CD4-positive, alpha-beta memory T cell (primary cell): ENCODE measurements at regions of chr19 and their contacts with region 1.

Region 1: GRCh38 chr19:58572818-58573657 is at the start of gene MZF1:
- DNase-seq: peak; percentile 99 to 100 (median 100)
- H3K4me3 ChIP-seq: peak within 1 kb of the TSS; percentile 67 to 78
- H3K4me3 Mint-ChIP-seq: peak within 1 kb of the TSS; percentile 89 to 99 (median 96)
- H3K27ac ChIP-seq: peak within 1 kb of the TSS; percentile 99
- H3K27ac Mint-ChIP-seq: peak within 1 kb of the TSS; percentile 96 to 100 (median 100)
- H3K4me1 ChIP-seq: peaks cover 29% of the 10 kb centered on the region
- H3K4me1 Mint-ChIP-seq: peaks cover 16 to 44% (median 32%) of the 10 kb centered on the region in 4 donors
- H3K27me3 ChIP-seq: no peaks in the 10 kb centered on the region
- H3K27me3 Mint-ChIP-seq: no peaks in the 10 kb centered on the region
- total RNA-seq, gene MZF1: 42.7 to 44.4 TPM

Region 2: DNA sequence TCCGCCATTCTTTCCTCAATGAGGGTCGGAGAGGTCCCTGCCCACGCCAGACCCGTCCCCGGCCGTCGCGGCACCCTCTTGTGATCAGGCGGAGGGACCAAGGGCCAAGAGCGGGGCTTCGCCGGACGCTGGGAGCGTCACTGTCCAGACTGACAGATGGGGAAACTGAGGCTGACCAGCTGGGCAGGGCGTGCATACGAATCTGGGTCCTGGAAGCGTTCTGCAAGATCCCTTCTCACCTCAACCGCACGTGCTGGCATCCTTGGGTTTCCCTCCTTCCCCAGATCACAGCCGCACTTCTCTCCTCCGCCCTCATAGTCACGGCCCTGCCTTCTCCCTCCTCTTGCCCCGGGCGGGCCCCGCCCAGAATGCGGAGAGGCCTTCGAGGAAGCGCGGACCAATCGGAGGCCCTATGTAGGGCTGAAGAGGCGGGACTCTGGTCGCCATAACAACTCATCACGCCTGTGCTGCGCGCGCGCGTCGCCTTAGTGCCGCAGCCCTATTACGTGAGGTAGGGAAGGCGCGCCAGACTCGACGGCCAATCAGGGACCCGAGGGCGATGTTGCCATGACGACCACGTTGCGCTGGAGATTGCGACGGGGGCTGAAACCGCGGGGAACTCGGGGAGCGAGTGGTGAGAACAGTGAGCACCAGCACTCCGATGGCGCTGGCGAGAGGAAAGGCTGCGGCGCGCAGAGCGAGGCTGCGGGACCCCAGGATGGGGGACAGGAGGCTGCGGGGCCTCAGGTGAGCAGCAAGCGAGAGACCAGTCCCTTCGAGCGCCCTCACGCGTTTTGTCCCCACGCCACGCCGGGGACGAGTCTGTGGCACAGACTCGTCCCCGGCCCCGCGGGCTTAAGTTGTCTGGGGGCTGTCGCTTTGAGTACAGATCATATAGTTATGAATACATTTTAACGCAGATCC is 171.9 kb before region 1 on chr19:
- CTCF ChIA-PET with region 1: no interaction called
- POLR2A ChIA-PET with region 1: no interaction called
- intact Hi-C with region 1: loop called (anchors 1 kb)
- DNase-seq: peak; percentile 98 to 100 (median 99)
- H3K4me3 ChIP-seq: peak overlapping the region; percentile 57 to 59
- H3K4me3 Mint-ChIP-seq: peak overlapping the region; percentile 87 to 97 (median 91)
- H3K27ac ChIP-seq: peak overlapping the region; percentile 74
- H3K27ac Mint-ChIP-seq: peak overlapping the region; percentile 89 to 99 (median 97)
- H3K4me1 ChIP-seq: peaks cover 20% of the 10 kb centered on the region
- H3K4me1 Mint-ChIP-seq: peaks cover 5 to 20% (median 10%) of the 10 kb centered on the region in 4 donors
- H3K27me3 ChIP-seq: peaks cover 8% of the 10 kb centered on the region
- H3K27me3 Mint-ChIP-seq: peaks cover 6 to 9% of the 10 kb centered on the region in 2 donors

Region 3: GRCh38 chr19:58408152-58409009 is 164.7 kb before region 1 on chr19 and contains the start of gene ZNF584:
- CTCF ChIA-PET with region 1: no interaction called
- POLR2A ChIA-PET with region 1: no interaction called
- intact Hi-C with region 1: loop called (anchors 1 kb)
- DNase-seq: peak; percentile 93 to 94 (median 93)
- H3K4me3 ChIP-seq: peak within 1 kb of the TSS; percentile 71 to 94
- H3K4me3 Mint-ChIP-seq: peak within 1 kb of the TSS; percentile 92 to 100 (median 96)
- H3K27ac ChIP-seq: peak within 1 kb of the TSS; percentile 77
- H3K27ac Mint-ChIP-seq: peak within 1 kb of the TSS; percentile 91 to 98 (median 95)
- H3K4me1 ChIP-seq: peaks cover 25% of the 10 kb centered on the region
- H3K4me1 Mint-ChIP-seq: peaks cover 21 to 39% (median 33%) of the 10 kb centered on the region in 4 donors
- H3K27me3 ChIP-seq: no peaks in the 10 kb centered on the region
- H3K27me3 Mint-ChIP-seq: no peaks in the 10 kb centered on the region
- total RNA-seq, gene ZNF584: 10.3 to 10.7 TPM

Region 4: DNA sequence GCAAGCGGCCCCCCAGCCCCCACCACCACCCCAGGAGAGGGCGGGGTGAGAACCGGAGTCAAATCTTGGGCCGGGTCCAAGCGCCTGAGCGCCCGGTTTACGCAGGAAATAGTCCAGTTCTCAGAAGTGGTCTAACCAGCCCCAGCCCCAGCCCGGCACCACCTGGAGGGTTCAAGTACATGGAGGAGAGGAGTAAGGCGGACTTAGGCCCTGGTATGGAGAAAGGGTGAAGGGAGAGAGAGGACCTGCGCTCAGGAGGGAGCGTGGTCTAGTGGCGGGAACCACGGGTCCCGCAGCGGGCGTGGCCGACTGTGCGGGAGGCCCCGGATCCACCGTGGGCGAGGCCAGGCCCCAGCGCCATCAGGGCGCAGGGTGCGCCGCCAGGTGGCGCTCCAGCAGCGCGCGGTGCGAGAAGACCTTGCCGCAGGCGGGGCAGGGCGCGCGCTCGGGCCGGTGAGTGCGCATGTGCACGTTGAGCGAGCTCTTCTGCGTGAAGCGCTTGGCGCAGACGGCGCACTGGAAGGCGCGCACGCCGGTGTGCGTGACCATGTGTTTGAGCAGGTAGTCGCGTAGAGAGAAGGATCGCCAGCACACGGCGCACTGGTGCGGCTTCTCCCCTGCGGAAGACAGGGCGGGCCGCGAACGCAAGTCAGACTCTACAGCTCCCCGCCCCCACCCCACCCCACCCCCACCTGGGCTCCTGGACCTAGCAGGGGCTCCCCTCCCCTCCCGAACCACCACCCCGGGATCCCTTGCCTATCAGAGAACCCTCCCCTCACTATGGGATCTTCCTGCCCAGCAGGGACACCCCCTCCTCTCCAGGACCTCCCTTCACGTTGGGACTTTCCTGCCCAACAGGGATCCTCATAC is 59.1 kb before region 1 on chr19:
- CTCF ChIA-PET with region 1: interaction called, 260 read pairs
- POLR2A ChIA-PET with region 1: interaction called, 47 read pairs
- intact Hi-C with region 1: no loop called
- DNase-seq: peak; percentile 93 to 95 (median 94)
- H3K4me3 ChIP-seq: peak overlapping the region in 1 of 2 donors; percentile 32
- H3K4me3 Mint-ChIP-seq: peak overlapping the region; percentile 74 to 88 (median 84)
- H3K27ac ChIP-seq: peak overlapping the region; percentile 61
- H3K27ac Mint-ChIP-seq: peak overlapping the region; percentile 82 to 93 (median 91)
- H3K4me1 ChIP-seq: peaks cover 31% of the 10 kb centered on the region
- H3K4me1 Mint-ChIP-seq: peaks cover 11 to 49% (median 29%) of the 10 kb centered on the region in 4 donors
- H3K27me3 ChIP-seq: no peaks in the 10 kb centered on the region
- H3K27me3 Mint-ChIP-seq: no peaks in the 10 kb centered on the region

Region 5: GRCh38 chr19:58543826-58544590 is 29.0 kb before region 1 on chr19 and contains the start of gene TRIM28:
- CTCF ChIA-PET with region 1: interaction called, 4 read pairs
- POLR2A ChIA-PET with region 1: interaction called, 13 read pairs
- intact Hi-C with region 1: loop called (anchors 1 kb)
- DNase-seq: peak; percentile 100
- H3K4me3 ChIP-seq: peak within 1 kb of the TSS; percentile 86 to 87
- H3K4me3 Mint-ChIP-seq: peak within 1 kb of the TSS; percentile 91 to 97 (median 95)
- H3K27ac ChIP-seq: peak within 1 kb of the TSS; percentile 78
- H3K27ac Mint-ChIP-seq: peak within 1 kb of the TSS; percentile 95 to 100 (median 99)
- H3K4me1 ChIP-seq: peaks cover 30% of the 10 kb centered on the region
- H3K4me1 Mint-ChIP-seq: peaks cover 20 to 39% (median 27%) of the 10 kb centered on the region in 4 donors
- H3K27me3 ChIP-seq: no peaks in the 10 kb centered on the region
- H3K27me3 Mint-ChIP-seq: peaks cover 0 to 7% of the 10 kb centered on the region in 2 donors
- total RNA-seq, gene TRIM28: 342 to 348 TPM

Region 6: GRCh38 chr19:58558623-58559274 is 14.3 kb before region 1 on chr19:
- CTCF ChIA-PET with region 1: interaction called, 6 read pairs
- POLR2A ChIA-PET with region 1: interaction called, 45 read pairs
- intact Hi-C with region 1: loop called (anchors 1 kb)
- DNase-seq: peak; percentile 99 to 100 (median 100)
- H3K4me3 ChIP-seq: peak overlapping the region; percentile 47 to 100
- H3K4me3 Mint-ChIP-seq: peak overlapping the region; percentile 92 to 98 (median 97)
- H3K27ac ChIP-seq: peak overlapping the region; percentile 99
- H3K27ac Mint-ChIP-seq: peak overlapping the region; percentile 97 to 99 (median 99)
- H3K4me1 ChIP-seq: peaks cover 79% of the 10 kb centered on the region
- H3K4me1 Mint-ChIP-seq: peaks cover 28 to 96% (median 61%) of the 10 kb centered on the region in 4 donors
- H3K27me3 ChIP-seq: no peaks in the 10 kb centered on the region
- H3K27me3 Mint-ChIP-seq: no peaks in the 10 kb centered on the region

Region 7: GRCh38 chr19:58586133-58586769 is 13.2 kb after region 1 on chr19:
- CTCF ChIA-PET with region 1: no interaction called
- POLR2A ChIA-PET with region 1: no interaction called
- intact Hi-C with region 1: no loop called
- DNase-seq: no peak
- H3K4me3 ChIP-seq: no peak overlapping the region
- H3K4me3 Mint-ChIP-seq: no peak overlapping the region
- H3K27ac ChIP-seq: no peak overlapping the region
- H3K27ac Mint-ChIP-seq: no peak overlapping the region
- H3K4me1 ChIP-seq: no peaks in the 10 kb centered on the region
- H3K4me1 Mint-ChIP-seq: peaks cover 4 to 9% (median 8%) of the 10 kb centered on the region in 4 donors
- H3K27me3 ChIP-seq: no peaks in the 10 kb centered on the region
- H3K27me3 Mint-ChIP-seq: no peaks in the 10 kb centered on the region